ENCODE measurements at regions of chr15 and their contacts with region 1.

Region 1: DNA sequence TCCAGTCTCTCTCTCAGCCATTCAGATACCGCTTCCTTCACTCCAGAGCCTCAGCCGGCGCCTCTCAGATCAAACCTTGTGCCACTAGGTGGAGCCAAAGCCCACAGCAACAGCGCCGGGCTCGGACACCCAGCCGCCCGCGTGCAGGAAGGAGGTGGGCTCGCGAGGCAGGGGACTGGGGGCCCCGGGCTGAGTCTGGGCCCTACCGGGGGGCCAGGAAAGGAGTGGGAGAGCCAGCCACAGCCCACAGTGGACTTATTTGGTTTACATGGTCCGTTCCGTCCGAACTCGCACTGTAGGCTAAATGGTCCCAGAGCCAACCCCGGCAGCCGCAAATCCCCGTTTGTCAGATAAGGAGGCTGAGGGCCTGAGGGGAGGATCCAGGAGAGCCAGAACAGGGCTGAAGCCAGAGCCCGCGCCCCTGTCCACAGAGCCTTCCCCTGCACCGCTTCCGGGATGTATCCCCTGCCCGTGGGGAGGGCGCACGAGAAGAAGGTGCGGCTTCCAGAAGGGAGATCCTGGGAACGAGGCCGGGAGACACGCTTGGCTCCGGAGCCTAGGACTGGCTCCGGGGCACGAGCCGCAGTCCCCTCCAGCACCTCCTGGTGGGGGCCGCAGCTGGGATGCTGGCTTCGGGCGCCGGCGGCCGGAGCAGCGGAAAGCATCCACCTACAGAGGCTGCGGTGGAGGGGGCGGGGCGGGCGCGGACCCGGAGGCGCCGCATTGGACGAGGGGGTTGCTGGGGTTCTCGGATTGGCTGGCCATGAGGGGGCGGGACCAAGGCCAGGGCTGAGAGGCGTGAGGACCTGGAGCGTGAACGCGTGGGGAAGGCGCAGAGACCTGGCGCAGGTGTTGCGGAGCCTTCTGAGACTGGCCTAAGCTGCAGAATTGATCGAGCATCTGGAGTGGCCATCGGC is 6.5 kb upstream of the CYP11A1 start:
- DNase-seq: peak; percentile 91 to 93
- ATAC-seq: peak; percentile 96 to 99 (median 98)
- H3K4me3 ChIP-seq: peak overlapping the region; percentile 29 to 80 (median 62)
- H3K27ac ChIP-seq: peak overlapping the region in 1 of 10 donors; percentile 66
- H3K4me1 ChIP-seq: peaks cover 7 to 28% (median 16%) of the 10 kb centered on the region in 9 donors
- H3K27me3 ChIP-seq: peaks cover 0 to 23% (median 4%) of the 10 kb centered on the region in 7 donors
- CTCF ChIP-seq: peak; percentile 83 to 93 (median 92)

Region 2: DNA sequence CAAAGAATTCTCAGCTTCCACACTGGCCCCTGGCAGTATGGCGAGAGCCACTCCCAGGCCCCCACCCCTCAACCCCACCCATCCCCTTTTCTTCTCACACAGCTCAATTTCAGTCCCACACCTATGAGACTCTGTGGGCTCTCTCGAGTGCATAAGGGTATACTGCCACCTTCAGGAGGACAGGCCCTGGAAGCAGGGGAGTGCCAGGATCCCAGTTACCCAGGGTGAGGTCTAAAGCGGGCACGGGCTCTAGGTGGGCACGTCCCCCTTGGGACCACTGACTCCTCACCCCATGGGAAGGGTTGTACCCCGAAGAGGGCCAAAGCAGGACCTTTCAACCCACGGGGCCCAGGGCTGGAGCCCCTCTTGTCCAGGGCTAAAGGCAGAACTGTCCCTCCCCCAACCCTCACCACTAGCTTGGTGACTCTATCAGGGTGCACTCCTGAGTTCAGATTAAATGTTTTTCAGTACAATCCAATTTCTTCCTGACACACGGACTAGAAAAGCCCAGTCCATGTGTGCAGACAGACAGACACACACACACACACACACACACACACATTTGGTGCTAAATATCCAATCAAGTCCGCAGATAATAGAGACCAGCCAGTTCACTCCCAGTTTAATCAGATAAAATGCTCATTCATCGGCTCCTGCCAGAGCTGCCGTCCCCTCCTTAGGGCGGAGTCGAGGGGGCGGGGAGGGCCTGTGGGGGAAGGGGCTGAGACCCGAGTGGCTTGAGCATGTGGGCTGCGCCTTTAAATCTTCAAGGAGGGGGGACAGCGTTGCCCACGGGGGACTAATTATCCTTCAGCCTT is 66.0 kb before region 1 on chr15:
- intact Hi-C with region 1: no loop called
- DNase-seq: peak; percentile 41 to 66
- ATAC-seq: peak; percentile 76 to 87 (median 82)
- H3K4me3 ChIP-seq: no peak overlapping the region
- H3K27ac ChIP-seq: no peak overlapping the region
- H3K4me1 ChIP-seq: peaks cover 0 to 8% (median 0%) of the 10 kb centered on the region in 9 donors
- H3K27me3 ChIP-seq: peaks cover 0 to 55% (median 32%) of the 10 kb centered on the region in 7 donors
- CTCF ChIP-seq: peak; percentile 45 to 79 (median 75)

Region 3: GRCh38 chr15:74438721-74439316 is 64.8 kb after region 1 on chr15:
- intact Hi-C with region 1: loop called in 3 of 10 experiments (anchors 2 kb)
- DNase-seq: peak; percentile 60 to 66
- ATAC-seq: peak; percentile 43 to 73 (median 64)
- H3K4me3 ChIP-seq: no peak overlapping the region
- H3K27ac ChIP-seq: no peak overlapping the region
- H3K4me1 ChIP-seq: peaks cover 0 to 32% (median 8%) of the 10 kb centered on the region in 9 donors
- H3K27me3 ChIP-seq: no peaks in the 10 kb centered on the region
- CTCF ChIP-seq: peak; percentile 82 to 95 (median 92)

Region 4: DNA sequence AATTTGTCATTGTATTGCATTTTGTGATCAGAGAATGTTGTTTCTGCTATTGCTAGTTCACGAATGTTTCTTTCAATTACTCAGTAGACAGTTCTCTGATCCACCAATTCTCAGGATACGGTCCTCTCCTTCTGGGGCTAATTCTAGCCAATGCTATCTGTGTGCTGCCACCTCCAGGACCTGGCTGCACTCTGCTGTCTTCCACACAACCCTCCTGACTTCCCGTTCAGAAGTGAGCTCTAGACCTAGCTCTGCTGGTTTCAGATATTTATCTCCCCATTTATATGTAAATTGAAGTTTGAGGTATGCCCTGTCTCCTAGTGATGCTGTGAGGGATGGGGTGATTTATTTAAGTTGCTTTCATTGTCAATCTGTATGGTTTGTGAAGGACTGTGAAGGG is 108.7 kb after region 1 on chr15:
- intact Hi-C with region 1: loop called in 1 of 10 experiments (anchors 5 kb)
- DNase-seq: no peak
- ATAC-seq: no peak
- H3K4me3 ChIP-seq: no peak overlapping the region
- H3K27ac ChIP-seq: no peak overlapping the region
- H3K4me1 ChIP-seq: no peaks in the 10 kb centered on the region
- H3K27me3 ChIP-seq: no peaks in the 10 kb centered on the region
- CTCF ChIP-seq: peak in 2 of 9 donors; percentile 7 to 15

Region 5: GRCh38 chr15:74489518-74490338 is 115.7 kb after region 1 on chr15:
- intact Hi-C with region 1: loop called in 9 of 10 experiments (anchors 1 to 5 kb)
- DNase-seq: peak; percentile 29 to 32
- ATAC-seq: peak in 7 of 8 donors; percentile 23 to 68 (median 56)
- H3K4me3 ChIP-seq: no peak overlapping the region
- H3K27ac ChIP-seq: no peak overlapping the region
- H3K4me1 ChIP-seq: no peaks in the 10 kb centered on the region
- H3K27me3 ChIP-seq: no peaks in the 10 kb centered on the region
- CTCF ChIP-seq: peak; percentile 30 to 76 (median 66)

Region 6: DNA sequence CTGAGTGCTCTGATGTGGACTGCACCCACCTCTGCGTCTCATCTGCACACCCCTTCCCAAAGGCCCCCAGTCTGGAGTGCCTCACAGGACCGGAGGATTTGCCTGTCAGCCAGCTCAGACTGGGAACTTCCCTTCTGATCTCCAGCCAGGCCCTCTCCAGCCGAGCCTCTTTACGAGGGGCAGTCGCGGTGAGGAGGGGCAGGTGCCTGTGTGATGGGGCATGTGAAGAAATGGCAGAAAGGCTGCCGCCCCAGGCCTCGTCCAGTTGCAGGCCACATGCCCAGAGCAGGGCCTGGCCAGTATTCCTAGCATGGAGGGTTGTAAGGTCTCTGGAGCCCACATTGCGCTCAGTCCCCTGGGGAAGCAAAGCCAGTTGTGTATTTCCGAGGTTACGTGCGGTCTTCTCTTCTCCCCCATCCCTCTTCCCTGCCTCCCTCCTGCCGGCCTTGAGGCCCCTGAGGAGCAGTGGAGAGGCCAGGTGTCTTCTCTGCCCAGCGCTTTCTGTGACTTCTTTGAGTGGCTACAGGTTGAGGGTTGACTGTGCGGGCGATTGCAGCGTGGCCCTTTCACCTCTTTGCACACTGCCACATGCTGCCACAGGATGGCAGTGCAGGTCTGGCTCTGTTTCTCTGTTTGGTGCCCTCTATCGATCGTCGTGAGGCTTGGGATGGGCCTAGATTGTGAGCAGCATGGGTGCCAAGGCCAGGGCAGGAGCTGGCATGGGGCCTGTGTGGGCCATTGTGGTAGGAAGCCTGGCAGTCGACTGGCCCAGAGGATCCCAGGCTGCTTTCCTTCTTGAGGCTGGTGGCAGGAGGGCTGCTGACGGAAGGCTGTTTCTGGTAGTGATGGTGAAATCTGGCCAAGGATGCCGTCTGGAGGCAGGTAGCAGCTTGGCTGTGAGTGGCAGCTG is 246.9 kb after region 1 on chr15:
- intact Hi-C with region 1: loop called in 1 of 10 experiments (anchors 5 kb)
- DNase-seq: peak; percentile 52 to 61
- ATAC-seq: peak; percentile 26 to 52 (median 47)
- H3K4me3 ChIP-seq: no peak overlapping the region
- H3K27ac ChIP-seq: peak overlapping the region in 1 of 10 donors; percentile 0
- H3K4me1 ChIP-seq: peaks cover 14 to 57% (median 45%) of the 10 kb centered on the region in 9 donors
- H3K27me3 ChIP-seq: no peaks in the 10 kb centered on the region
- CTCF ChIP-seq: peak; percentile 41 to 89 (median 74)

Region 7: DNA sequence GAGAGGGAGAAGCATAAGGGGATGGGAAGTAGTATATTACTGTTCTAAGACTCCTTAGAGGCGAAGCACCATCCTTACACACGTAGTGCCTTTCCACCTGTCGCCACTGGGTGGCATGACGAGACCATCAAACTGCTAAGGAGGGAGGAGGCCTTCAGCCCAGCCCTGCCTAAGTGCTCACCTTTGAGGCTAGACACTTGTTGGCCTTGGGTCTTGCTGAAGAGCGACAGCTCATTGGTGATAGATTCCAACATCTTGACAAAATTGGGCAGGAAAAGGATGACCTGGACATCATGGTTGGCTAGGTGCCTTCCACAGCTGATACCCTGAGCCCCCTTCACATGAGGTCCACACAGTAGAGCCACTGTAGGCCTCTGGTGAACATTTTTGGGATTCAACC is 261.2 kb after region 1 on chr15:
- intact Hi-C with region 1: loop called in 7 of 10 experiments (anchors 2 to 5 kb)
- DNase-seq: peak in 1 of 2 donors; percentile 61
- ATAC-seq: peak; percentile 49 to 78 (median 74)
- H3K4me3 ChIP-seq: no peak overlapping the region
- H3K27ac ChIP-seq: no peak overlapping the region
- H3K4me1 ChIP-seq: peaks cover 0 to 7% (median 0%) of the 10 kb centered on the region in 9 donors
- H3K27me3 ChIP-seq: no peaks in the 10 kb centered on the region
- CTCF ChIP-seq: peak; percentile 66 to 93 (median 87)

Region 8: DNA sequence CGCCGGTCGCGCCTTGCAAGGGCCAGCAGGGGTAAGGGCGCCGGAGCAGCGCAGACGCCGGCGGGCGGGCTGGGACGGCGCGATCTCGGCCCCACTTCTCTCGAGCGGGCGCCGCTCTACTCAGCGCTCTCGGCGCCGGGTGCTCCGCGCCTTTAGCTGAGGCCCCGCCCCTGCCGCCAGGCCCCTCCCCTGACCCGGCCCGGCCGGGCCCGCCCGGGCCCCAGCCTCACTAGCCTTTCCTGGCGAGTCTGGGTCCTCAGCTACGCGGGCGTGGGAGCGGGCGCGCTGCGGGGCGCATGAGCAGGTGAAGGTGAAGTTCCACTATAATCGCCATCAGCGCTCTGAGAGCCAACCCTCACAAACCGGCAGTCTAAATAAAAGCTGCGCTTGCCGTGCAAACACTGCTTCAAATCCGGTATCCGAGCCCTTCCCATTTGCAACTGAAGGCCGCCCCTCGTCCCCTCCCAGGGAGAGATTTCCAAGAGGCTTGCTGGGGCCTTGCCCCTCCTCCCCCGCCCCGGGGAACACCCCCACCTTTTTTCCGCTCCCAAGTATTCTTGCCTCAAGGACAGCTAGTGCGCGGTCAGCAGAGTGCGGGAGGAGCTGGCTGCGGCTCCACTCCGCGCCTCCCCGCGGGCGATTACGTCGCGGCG is 582.8 kb after region 1 on chr15 and contains the start of gene RPP25:
- intact Hi-C with region 1: loop called in 1 of 10 experiments (anchors 10 kb)
- DNase-seq: peak; percentile 63 to 83
- ATAC-seq: peak; percentile 83 to 93 (median 89)
- H3K4me3 ChIP-seq: peak within 1 kb of the TSS; percentile 23 to 83 (median 60)
- H3K27ac ChIP-seq: peak within 1 kb of the TSS; percentile 19 to 87 (median 76)
- H3K4me1 ChIP-seq: peaks cover 0 to 62% (median 33%) of the 10 kb centered on the region in 9 donors
- H3K27me3 ChIP-seq: peaks cover 0 to 49% (median 16%) of the 10 kb centered on the region in 7 donors
- CTCF ChIP-seq: no peak
- total RNA-seq, gene RPP25: 0.83 to 3.0 (median 1.3) TPM

Measured in heart right ventricle (tissue), 16 donors.